ENCODE measurements at regions of chr17 and their contacts with region 1.

Region 1: GRCh38 chr17:28951991-28952975 is 965 bp upstream of the PHF12 start:
- DNase-seq: peak; percentile 98
- ATAC-seq: peak; percentile 75
- H3K4me3 Mint-ChIP-seq: no peak overlapping the region
- H3K27ac Mint-ChIP-seq: no peak overlapping the region
- H3K4me1 Mint-ChIP-seq: peaks cover 15% of the 10 kb centered on the region
- H3K27me3 Mint-ChIP-seq: no peaks in the 10 kb centered on the region
- CTCF ChIP-seq: no peak

Region 2: DNA sequence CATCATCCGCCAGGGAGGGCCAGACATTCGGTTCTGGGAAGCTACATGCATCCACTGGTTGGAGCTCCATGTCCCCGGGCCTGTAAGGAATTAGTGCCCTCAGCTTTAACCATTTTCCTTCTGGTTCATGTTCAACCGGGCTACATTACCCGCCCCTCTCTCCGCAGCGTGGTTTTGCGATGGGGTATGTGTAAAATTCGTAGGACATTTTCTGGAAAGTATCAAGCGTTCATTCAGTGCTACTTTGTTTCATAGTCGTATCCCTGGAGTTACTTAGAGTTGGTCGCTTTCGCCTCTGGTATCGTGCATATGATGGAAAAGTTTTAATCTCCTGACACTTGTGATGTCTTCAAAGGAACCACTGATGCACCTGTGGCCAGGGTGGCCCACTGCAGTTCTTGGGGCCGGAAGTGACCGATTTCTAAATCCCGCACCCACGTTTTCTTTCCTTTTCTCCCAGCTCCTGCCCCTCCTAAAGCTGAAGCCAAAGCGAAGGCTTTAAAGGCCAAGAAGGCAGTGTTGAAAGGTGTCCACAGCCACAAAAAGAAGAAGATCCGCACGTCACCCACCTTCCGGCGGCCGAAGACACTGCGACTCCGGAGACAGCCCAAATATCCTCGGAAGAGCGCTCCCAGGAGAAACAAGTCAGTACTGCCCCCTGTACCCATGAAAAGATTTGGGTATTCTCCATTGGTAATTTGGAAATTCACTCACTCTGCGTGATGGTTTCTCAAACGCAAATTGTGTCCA is 231.9 kb before region 1 on chr17:
- CTCF ChIA-PET with region 1: interaction called, 11 read pairs
- POLR2A ChIA-PET with region 1: interaction called, 46 read pairs
- intact Hi-C with region 1: no loop called
- DNase-seq: peak; percentile 58
- ATAC-seq: no peak
- H3K4me3 Mint-ChIP-seq: peak overlapping the region; percentile 100
- H3K27ac Mint-ChIP-seq: peak overlapping the region; percentile 99
- H3K4me1 Mint-ChIP-seq: peaks cover 40% of the 10 kb centered on the region
- H3K27me3 Mint-ChIP-seq: peaks cover 11% of the 10 kb centered on the region
- CTCF ChIP-seq: peak; percentile 32

Region 3: DNA sequence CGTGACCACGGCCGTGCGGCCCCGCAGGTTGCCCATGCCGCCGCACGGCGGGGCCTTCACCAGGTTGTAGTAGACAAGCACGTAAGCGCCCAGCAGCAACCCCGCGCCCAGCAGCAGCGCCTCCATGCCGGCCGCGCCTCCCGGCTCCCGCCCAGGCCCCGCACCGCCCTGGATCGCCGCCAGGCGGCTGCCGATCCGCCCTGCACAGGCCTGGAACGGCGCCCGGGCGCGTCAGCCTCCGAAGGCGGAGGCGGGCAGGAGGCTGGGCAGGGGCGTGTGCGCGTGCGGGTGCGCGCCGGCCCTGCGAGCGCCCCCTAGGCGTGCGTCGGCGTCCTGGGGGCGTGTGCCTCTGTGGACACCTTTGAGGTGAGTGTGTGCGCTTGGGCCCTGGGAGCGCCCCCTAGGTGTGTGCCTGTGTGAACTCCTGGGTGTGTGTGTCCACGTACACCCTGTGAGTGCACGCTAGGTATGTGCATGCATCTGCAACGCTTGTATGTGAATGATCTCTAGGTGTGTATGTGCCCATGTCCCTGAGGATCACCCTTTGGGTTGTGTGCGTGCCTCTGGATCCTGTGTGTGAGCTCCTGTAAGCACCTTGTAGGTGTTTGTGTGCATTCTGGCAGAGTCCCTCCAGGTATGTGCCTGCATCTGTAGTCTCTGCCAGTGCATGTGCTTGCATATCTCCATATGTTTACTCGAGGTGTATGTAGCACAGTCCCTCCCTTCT is 49.3 kb before region 1 on chr17 and contains the start of gene DHRS13:
- CTCF ChIA-PET with region 1: interaction called, 17 read pairs
- POLR2A ChIA-PET with region 1: interaction called, 13 read pairs
- intact Hi-C with region 1: loop called (anchors 5 kb)
- DNase-seq: peak; percentile 93
- ATAC-seq: peak; percentile 95
- H3K4me3 Mint-ChIP-seq: peak within 1 kb of the TSS; percentile 88
- H3K27ac Mint-ChIP-seq: peak within 1 kb of the TSS; percentile 86
- H3K4me1 Mint-ChIP-seq: peaks cover 31% of the 10 kb centered on the region
- H3K27me3 Mint-ChIP-seq: no peaks in the 10 kb centered on the region
- CTCF ChIP-seq: peak; percentile 100
- total RNA-seq, gene DHRS13: 37.3 to 38.2 TPM

Region 4: DNA sequence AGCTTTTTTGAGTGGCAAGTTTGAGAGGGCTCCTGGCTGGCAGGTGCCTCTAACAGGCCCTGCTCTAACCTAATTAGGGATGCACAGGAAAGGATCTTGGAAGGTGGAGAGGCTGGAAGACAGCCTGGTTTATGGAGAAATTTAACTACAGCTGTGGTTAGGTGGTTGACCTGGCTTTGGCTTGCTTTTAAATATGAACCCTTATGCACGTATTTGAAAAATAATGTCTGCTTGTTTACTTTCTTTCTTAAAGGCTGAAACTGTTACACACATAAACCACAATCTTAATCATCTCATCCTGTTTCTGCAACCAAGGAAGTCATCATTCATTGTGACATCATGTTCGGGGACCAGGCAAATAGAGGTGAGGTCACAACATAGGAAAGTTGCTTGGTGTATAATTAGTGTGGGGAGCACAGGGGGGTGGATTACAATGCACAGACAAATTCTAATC is 26.3 kb before region 1 on chr17:
- CTCF ChIA-PET with region 1: interaction called, 9 read pairs
- POLR2A ChIA-PET with region 1: interaction called, 19 read pairs
- intact Hi-C with region 1: no loop called
- DNase-seq: peak; percentile 59
- ATAC-seq: peak; percentile 85
- H3K4me3 Mint-ChIP-seq: peak overlapping the region; percentile 31
- H3K27ac Mint-ChIP-seq: peak overlapping the region; percentile 82
- H3K4me1 Mint-ChIP-seq: peaks cover 59% of the 10 kb centered on the region
- H3K27me3 Mint-ChIP-seq: no peaks in the 10 kb centered on the region
- CTCF ChIP-seq: no peak

Region 5: DNA sequence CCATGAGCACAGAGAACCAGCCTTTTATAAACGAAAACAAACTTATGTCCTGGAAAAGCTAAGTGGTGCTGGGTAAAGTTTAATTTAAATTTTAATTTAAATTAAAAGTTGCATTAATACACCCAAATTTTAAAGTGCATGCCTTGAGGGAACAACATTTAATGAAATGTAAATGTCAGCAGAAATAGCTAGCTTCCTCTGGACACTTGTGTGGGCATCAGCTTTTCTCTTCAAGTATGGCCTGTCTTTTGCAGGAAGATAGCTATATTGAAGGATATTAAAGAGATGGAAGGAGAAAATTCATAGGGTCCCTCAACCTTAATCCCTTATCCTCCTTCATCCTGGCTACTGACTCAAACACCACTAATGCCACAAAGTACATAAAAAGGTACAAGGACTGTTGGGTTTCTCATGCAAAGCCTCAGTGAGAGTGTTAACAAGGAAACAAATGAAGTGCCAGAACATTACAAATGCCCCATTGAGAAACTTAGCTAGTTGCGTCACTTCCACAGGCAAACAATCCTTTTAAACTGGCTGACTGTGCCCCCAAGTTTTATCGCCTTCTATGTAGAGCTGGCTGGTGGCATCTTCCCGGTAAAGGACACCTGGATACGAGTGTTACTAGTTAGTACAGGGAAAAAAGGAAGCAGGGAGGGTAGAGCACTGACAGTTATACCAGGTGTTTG is 15.1 kb before region 1 on chr17:
- CTCF ChIA-PET with region 1: interaction called, 8 read pairs
- POLR2A ChIA-PET with region 1: interaction called, 34 read pairs
- intact Hi-C with region 1: no loop called
- DNase-seq: no peak
- ATAC-seq: no peak
- H3K4me3 Mint-ChIP-seq: no peak overlapping the region
- H3K27ac Mint-ChIP-seq: no peak overlapping the region
- H3K4me1 Mint-ChIP-seq: peaks cover 74% of the 10 kb centered on the region
- H3K27me3 Mint-ChIP-seq: no peaks in the 10 kb centered on the region
- CTCF ChIP-seq: no peak

Region 6: GRCh38 chr17:29005936-29006511 is 53.7 kb after region 1 on chr17 and contains the start of gene SEZ6:
- CTCF ChIA-PET with region 1: no interaction called
- POLR2A ChIA-PET with region 1: no interaction called
- intact Hi-C with region 1: no loop called
- DNase-seq: peak; percentile 77
- ATAC-seq: peak; percentile 95
- H3K4me3 Mint-ChIP-seq: no peak within 1 kb of the TSS
- H3K27ac Mint-ChIP-seq: no peak within 1 kb of the TSS
- H3K4me1 Mint-ChIP-seq: peaks cover 2% of the 10 kb centered on the region
- H3K27me3 Mint-ChIP-seq: peaks cover 49% of the 10 kb centered on the region
- CTCF ChIP-seq: no peak
- total RNA-seq, gene SEZ6: not detected

Region 7: DNA sequence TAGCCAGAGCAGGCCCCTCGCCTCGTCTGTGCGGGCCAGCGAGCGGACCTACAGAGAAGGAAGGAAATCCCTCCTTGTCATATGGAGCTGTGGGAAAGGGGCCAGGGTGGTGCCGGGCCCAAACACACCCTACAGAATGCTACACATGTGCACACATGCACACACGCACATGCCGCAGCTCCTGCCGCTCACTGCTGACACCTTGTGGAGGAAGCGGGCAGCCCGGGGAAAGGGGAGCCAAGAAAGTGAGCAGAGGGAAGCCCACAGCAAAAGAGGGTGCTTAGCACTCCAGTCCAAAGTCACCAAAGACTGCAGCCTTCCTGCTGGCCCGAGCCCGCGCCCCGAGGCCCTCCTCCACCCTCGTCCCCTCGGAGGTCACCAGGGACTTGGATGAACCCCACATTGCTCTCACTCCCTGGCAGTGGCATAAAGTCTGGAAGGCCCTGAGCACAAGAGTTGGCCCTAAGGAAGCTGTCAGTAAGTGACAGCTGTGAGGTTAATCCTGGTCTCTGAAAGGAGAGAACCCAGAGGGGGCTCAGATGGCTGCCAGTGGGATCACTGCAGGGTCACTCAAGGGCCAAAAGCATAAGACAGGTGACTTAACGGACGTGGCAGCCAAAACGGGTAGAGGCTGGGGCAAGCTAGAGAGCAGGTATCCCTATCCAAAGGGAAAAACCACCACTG is 159.7 kb after region 1 on chr17:
- CTCF ChIA-PET with region 1: interaction called, 20 read pairs
- POLR2A ChIA-PET with region 1: no interaction called
- intact Hi-C with region 1: no loop called
- DNase-seq: peak; percentile 79
- ATAC-seq: peak; percentile 87
- H3K4me3 Mint-ChIP-seq: no peak overlapping the region
- H3K27ac Mint-ChIP-seq: no peak overlapping the region
- H3K4me1 Mint-ChIP-seq: peaks cover 9% of the 10 kb centered on the region
- H3K27me3 Mint-ChIP-seq: no peaks in the 10 kb centered on the region
- CTCF ChIP-seq: peak; percentile 91